ENCODE measurements at regions of chr11 and their contacts with region 1.

Region 1: GRCh38 chr11:3091791-3092602 is 34.8 kb upstream of the CARS1 start:
- DNase-seq: peak; percentile 41 to 74 (median 64)
- H3K4me3 ChIP-seq: no peak overlapping the region
- H3K27ac ChIP-seq: no peak overlapping the region
- H3K4me1 ChIP-seq: no peaks in the 10 kb centered on the region
- H3K27me3 ChIP-seq: no peaks in the 10 kb centered on the region
- CTCF ChIP-seq: peak; percentile 90 to 100 (median 92)
- EP300 ChIP-seq: no peak
- POLR2A ChIP-seq: no peak

Region 2: GRCh38 chr11:2532704-2533586 is 559.1 kb before region 1 on chr11:
- intact Hi-C with region 1: loop called in 1 of 4 experiments (anchors 10 kb)
- DNase-seq: peak; percentile 92 to 97 (median 96)
- H3K4me3 ChIP-seq: peak overlapping the region; percentile 14
- H3K27ac ChIP-seq: peak overlapping the region in 1 of 2 donors; percentile 39
- H3K4me1 ChIP-seq: peaks cover 7% of the 10 kb centered on the region
- H3K27me3 ChIP-seq: no peaks in the 10 kb centered on the region
- CTCF ChIP-seq: peak; percentile 98 to 99 (median 99)
- EP300 ChIP-seq: no peak
- POLR2A ChIP-seq: peak; percentile 42

Region 3: DNA sequence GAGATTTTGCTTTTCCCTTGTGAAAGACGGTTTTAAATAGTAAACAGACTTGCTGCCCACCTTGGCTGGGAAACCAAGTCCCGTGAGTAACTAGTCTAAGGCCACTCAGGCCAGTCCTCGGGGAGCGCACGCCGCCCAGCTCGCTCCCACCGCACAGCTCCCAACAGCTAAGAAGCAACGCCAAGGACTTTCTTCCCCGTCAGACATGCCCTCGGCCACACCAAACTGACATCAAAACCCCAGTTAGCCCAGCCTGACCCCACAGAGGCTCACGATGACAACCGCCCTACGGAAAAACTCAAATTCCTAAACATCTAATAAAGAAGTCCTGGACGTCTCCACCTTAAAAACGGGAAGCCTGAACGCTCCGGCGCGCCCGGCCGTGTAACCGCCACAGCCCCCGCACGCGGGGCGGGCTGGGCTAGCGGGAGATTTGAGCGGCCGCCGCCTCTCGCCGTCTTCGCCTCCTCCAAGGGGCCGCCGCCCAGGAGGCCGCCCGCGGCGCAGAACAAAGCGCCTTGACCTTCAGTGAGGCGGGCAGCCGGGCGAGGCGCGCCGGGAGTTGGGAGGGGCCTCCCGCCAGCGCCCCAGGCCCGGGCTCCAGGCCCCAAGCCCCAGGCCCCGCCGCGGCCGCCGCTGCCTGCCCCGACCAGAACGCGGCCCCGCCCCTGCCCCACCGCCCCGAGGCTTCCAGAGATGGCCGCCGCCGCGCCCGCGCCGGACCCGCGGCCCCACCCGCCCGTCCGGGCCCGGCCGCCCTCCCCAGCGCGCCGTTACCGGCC is 100.4 kb before region 1 on chr11:
- intact Hi-C with region 1: no loop called
- DNase-seq: no peak
- H3K4me3 ChIP-seq: peak overlapping the region; percentile 90
- H3K27ac ChIP-seq: peak overlapping the region; percentile 91 to 92
- H3K4me1 ChIP-seq: peaks cover 9% of the 10 kb centered on the region
- H3K27me3 ChIP-seq: no peaks in the 10 kb centered on the region
- CTCF ChIP-seq: no peak
- EP300 ChIP-seq: no peak
- POLR2A ChIP-seq: no peak

Region 4: DNA sequence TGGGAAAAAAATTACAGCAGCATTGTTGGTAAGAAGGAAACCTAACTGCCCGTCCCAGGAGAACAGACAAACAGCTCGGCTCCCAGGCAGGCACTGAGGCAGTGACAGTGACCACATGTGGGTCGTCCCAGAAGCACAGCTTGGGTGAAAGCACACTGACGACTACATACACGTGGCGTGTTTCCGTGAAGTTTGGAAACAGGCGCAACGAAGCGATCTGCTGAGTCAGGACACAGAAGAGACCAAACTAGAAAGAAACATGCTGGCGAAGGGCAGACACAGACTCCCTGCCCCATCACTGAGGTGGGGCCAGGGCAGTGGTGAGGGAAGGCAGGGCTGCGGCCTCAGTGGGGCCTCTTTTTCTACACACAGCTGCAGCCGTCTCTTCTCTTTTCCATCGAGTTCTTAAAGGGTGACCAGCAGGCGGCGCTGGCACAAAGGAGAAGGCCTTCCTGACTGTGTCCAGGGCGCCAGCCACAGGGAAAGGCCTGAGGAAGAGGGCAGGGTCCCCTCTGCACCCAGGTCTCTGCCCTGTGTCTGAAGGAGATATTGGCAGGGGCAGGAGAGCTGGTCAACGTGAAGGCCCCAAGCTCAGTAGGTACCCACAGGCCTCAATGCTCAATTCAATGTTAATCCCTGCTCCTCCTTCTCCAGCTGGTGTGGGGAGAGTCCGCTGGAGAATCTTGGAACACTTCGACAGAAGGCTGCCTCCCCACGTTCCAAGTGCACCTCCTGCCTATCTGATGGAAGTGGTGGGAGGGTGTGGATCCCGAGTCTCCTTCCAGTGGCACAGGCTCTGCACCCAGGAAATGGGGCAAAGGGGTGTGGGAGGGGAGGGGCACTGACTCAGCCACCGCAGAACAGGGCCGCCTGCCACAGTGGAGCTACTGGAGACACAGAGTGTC is 54.7 kb before region 1 on chr11:
- intact Hi-C with region 1: loop called in 3 of 4 experiments (anchors 5 to 10 kb)
- DNase-seq: peak; percentile 60 to 86 (median 74)
- H3K4me3 ChIP-seq: no peak overlapping the region
- H3K27ac ChIP-seq: no peak overlapping the region
- H3K4me1 ChIP-seq: no peaks in the 10 kb centered on the region
- H3K27me3 ChIP-seq: no peaks in the 10 kb centered on the region
- CTCF ChIP-seq: peak; percentile 27 to 58 (median 44)
- EP300 ChIP-seq: no peak
- POLR2A ChIP-seq: no peak